Activated T-helper 1 cell treated with anti-CD3 and anti-CD28 coated beads, Interleukin-12 subunit alpha, Interleukin-12 subunit beta, Interleukin-2, Interleukin-4 antibody, amounts not matched to agents 30 ng/mL and 10 ng/mL and 1 ng/mL, durations not matched to agents 14 hours and 24 hours and 36 hours (primary cell): ENCODE measurements at regions of chr12 and their contacts with region 1.

Region 1: DNA sequence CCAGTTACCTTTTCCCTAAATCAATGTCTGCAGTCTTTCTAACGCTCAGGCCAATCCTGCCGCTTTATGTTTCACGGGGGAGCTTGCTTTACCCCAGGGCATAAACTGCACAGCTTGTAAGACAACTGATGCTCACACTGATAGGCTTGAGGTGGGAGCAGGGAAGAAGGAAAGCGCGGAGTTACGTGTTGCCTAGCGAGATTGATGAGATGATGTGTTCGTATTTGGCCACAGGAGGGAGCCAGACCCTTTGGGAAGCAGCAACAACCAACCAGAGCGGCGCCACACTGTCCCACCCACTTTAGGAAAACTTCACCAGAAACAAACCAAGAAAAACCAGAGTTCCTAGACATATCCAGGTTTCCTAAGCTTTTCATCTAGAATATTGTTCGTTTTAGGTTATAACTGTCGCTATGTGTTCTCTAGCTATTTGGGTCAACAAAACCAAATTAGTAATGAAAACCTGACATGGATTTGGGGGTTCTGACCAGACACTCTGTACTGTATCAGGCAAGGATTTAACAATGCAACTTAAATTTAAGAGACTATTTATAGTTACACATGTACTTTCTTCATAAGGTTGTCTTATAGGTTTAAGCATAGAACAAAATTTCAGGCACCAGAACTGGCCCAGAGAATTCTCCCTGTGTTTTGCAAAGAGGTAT is 2.4 kb downstream of the IL26 start:
- DNase-seq: peak; percentile 68
- H3K4me3 Mint-ChIP-seq: peak overlapping the region; percentile 79
- H3K27ac Mint-ChIP-seq: peak overlapping the region; percentile 61
- H3K4me1 Mint-ChIP-seq: peaks cover 56% of the 10 kb centered on the region
- H3K27me3 Mint-ChIP-seq: no peaks in the 10 kb centered on the region

Region 2: GRCh38 chr12:68158432-68158831 is 64.8 kb before region 1 on chr12:
- intact Hi-C with region 1: loop called (anchors 2 kb)
- DNase-seq: no peak
- H3K4me3 Mint-ChIP-seq: peak overlapping the region; percentile 91
- H3K27ac Mint-ChIP-seq: peak overlapping the region; percentile 87
- H3K4me1 Mint-ChIP-seq: peaks cover 65% of the 10 kb centered on the region
- H3K27me3 Mint-ChIP-seq: no peaks in the 10 kb centered on the region

Region 3: DNA sequence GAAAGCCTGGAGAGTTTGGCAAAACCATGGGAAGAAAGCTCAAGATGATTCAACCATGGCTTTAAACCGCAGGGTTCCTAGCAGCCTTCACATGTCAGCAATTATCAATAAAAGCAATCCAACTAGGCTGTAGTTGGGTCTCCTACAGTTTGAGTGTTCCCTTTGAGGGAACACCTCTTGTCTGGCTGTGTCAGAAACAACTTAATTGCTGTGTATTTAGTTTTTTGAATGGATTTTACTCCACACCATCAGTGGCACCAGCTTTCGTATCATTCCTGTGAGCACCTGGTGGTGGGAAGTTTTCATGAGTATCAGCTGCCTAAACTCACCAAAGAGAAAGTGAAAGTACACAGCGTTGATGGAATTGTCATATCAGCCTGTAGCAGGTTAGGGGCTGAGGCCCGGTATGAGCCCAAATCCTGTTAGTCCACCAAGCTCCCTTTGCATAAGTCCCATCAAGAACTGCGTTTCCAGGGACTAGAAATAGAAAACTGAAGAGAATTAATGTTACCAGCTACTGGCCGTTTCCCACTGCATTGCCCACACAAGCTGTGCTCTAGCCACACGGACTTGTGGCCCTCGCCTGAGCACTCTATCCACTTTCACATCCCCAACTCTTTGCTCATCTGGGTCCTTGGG is 13.3 kb after region 1 on chr12:
- intact Hi-C with region 1: loop called (anchors 1 kb)
- DNase-seq: peak; percentile 39
- H3K4me3 Mint-ChIP-seq: peak overlapping the region; percentile 84
- H3K27ac Mint-ChIP-seq: peak overlapping the region; percentile 93
- H3K4me1 Mint-ChIP-seq: peaks cover 94% of the 10 kb centered on the region
- H3K27me3 Mint-ChIP-seq: no peaks in the 10 kb centered on the region

Region 4: GRCh38 chr12:68290126-68290525 is 66.9 kb after region 1 on chr12:
- intact Hi-C with region 1: loop called (anchors 1 kb)
- DNase-seq: peak; percentile 45
- H3K4me3 Mint-ChIP-seq: peak overlapping the region; percentile 15
- H3K27ac Mint-ChIP-seq: peak overlapping the region; percentile 59
- H3K4me1 Mint-ChIP-seq: peaks cover 75% of the 10 kb centered on the region
- H3K27me3 Mint-ChIP-seq: peaks cover 3% of the 10 kb centered on the region

Region 5: GRCh38 chr12:68745904-68746571 is 522.8 kb after region 1 on chr12 and contains the start of gene SLC35E3:
- intact Hi-C with region 1: loop called (anchors 5 kb)
- DNase-seq: peak; percentile 91
- H3K4me3 Mint-ChIP-seq: peak within 1 kb of the TSS; percentile 94
- H3K27ac Mint-ChIP-seq: peak within 1 kb of the TSS; percentile 87
- H3K4me1 Mint-ChIP-seq: peaks cover 50% of the 10 kb centered on the region
- H3K27me3 Mint-ChIP-seq: no peaks in the 10 kb centered on the region
- total RNA-seq, gene SLC35E3: 5.9 and 6.3 TPM in 2 replicates